A549 (cell line): ENCODE measurements at regions of chr10 and their contacts with region 1.

Region 1: GRCh38 chr10:123994417-123995081 is 98.8 kb downstream of the CHST15 start:
- DNase-seq: peak; percentile 83 to 91
- ATAC-seq: peak; percentile 73 to 87
- H3K4me3 ChIP-seq: peak overlapping the region; percentile 57
- H3K27ac ChIP-seq: peak overlapping the region; percentile 68 to 87
- H3K4me1 ChIP-seq: peaks cover 27% of the 10 kb centered on the region
- CTCF ChIP-seq: peak; percentile 96
- EP300 ChIP-seq: no peak
- POLR2A ChIP-seq: no peak
- RAD21 ChIP-seq: peak; percentile 93 to 99

Region 2: DNA sequence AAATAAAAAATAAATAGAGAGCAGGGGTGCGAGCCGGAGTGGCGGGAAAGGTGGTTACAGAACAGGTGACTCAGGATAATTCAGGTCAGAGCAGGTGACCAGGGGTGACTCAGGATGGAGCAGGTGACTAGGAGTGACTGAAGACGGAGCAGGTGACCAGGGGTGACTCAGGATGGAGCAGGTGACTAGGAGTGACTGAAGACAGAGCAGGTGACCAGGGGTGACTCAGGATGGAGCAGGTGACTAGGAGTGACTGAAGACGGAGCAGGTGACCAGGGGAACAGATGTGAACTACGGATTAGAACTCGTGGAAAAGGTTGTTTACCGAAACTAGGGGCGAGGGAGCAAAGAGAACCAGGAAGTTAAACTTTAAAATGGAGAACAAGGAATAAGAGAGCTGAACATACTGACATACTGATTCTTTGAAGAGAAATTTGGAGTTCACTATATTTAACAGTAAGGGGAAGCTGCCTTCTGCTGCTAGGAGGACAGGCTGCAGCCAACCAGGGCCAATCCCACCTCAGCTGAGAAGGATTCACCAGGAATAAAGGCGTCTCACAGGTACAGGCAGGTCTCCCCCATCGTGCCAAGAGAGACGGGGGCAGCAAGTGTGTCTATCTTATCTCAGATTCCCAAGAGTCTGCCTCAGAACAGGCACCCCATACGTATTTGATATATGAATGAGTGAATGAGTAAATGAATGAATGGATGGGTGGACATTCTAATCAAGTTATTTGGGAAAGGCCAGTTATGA is 204.2 kb before region 1 on chr10:
- CTCF ChIA-PET with region 1: no interaction called
- POLR2A ChIA-PET with region 1: no interaction called
- DNase-seq: no peak
- ATAC-seq: no peak
- H3K4me3 ChIP-seq: no peak overlapping the region
- H3K27ac ChIP-seq: no peak overlapping the region
- H3K4me1 ChIP-seq: no peaks in the 10 kb centered on the region
- CTCF ChIP-seq: no peak
- EP300 ChIP-seq: no peak
- POLR2A ChIP-seq: no peak
- RAD21 ChIP-seq: no peak

Region 3: DNA sequence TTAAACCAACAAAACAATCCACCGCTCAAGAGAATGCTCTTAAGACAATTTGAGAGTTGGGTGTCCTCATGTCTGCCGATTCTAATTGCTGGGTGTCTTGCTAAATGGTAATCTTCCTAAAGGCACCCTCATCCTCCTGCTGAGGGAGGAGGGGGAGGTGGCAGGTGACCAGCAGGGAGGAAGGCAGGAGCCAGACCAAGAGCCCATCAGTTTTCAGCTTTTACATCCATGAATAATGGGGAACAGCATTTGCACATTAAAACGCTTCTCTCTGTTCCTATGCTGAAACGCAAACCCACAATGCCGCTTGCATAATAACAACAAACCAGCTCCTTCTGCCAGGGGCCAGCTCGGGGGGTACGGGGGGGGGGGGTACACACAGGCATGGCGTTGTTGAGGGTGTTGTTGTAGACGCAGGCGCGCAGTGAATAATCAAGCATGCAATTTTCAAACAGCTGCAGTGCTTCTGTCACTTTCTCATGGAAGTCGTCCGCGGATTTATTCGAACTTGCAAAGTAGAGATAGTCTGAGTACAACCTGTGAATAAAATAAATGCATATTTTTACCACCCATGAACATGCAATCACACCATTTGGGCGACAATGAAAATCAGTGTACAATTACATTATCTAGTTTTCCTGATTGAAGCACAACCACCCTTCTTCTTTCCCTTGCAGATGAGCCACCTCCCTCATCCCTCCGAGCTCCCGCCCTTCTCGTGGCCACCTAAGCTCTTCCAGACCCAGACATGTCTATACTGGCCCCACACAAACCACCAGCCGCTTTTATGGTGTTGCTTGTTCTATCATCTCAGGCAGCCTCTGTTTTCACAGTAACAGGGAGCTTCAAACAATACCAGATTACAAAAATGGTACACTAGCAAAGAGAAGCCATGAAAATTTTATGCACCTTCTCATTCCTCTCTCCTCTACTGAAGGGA is 26.6 kb after region 1 on chr10:
- CTCF ChIA-PET with region 1: interaction called, 14 read pairs
- POLR2A ChIA-PET with region 1: no interaction called
- DNase-seq: no peak
- ATAC-seq: no peak
- H3K4me3 ChIP-seq: no peak overlapping the region
- H3K27ac ChIP-seq: no peak overlapping the region
- H3K4me1 ChIP-seq: no peaks in the 10 kb centered on the region
- CTCF ChIP-seq: no peak
- EP300 ChIP-seq: no peak
- POLR2A ChIP-seq: no peak
- RAD21 ChIP-seq: no peak

Region 4: DNA sequence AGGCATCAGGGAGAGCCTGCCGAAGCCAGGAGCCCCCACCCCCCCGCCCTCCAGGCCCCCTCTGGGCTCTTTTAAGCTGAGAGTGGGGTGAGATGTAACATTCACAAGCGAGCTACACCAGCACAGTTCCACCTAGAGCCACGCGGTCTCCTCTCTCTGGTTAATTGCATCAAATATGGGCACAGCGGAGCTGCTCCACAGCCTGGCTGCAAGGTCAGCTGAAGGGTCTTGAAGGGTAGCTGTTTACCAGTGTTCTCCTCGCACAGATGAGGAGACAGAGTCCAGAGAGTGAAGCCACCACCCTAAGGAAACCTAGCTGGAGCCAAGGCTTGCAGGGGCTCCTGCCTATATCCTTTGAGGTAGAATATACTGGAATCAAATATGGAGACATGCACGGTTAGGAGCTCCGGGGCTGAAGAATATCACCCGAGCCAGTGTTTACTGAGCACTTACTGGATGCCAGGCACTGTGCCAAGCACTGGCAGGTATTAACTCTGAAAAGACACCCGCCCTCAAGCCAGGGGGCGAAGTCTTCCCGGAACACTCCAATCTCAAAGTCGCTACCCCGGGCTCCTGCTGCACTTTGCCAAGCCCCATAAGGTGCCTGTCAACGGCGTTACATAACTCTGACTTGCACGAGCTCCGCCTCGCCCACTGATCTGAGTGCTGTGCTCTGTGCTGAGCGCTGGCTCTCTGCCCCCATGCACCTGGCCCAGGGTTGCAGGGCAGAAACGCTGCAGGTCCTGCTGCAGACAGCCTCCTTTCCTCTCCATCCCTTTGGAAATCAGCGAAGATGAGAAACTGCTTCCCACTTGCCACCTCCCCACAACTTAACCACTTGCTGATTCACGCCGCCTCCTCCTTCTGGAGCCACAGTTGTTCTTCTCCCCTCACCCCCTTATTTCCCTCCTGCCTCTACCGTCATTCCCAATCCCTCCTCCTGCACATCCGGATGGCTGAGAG is 93.4 kb after region 1 on chr10:
- CTCF ChIA-PET with region 1: interaction called, 45 read pairs
- POLR2A ChIA-PET with region 1: interaction called, 18 read pairs
- DNase-seq: no peak
- ATAC-seq: no peak
- H3K4me3 ChIP-seq: no peak overlapping the region
- H3K27ac ChIP-seq: no peak overlapping the region
- H3K4me1 ChIP-seq: peaks cover 9% of the 10 kb centered on the region
- CTCF ChIP-seq: no peak
- EP300 ChIP-seq: no peak
- POLR2A ChIP-seq: no peak
- RAD21 ChIP-seq: no peak

Region 5: DNA sequence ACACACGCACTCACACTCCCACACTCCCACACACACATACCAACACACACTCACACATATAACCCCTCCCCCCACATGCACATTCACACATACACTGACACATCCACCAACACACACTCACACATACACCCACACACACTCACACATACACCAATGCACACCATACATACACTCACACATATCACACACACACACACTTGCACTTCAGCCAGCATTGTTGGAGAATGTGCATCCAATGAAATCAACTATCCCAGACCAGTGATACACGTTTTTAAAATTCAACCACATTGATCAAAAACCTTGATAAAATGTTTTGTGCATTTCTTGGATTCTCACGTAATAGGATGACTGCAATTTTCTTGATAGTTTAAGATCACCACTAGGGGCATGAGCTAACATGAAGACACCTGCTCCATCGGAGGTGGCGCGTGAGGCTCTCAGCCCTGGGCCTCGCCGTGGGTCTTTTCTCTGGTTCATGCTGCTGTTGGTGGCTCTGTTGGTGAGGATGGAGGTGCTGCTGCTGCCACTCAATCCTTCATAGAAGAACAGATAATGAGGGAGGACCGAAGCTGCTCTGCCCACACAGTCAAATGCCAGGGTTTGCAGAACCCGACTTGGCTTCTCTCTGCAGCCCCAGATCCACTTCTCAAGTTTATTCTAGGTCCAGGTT is 131.0 kb after region 1 on chr10:
- CTCF ChIA-PET with region 1: interaction called, 10 read pairs
- POLR2A ChIA-PET with region 1: no interaction called
- DNase-seq: peak; percentile 30 to 58
- ATAC-seq: peak; percentile 54 to 83; a peak in 4 of 6 replicates
- H3K4me3 ChIP-seq: no peak overlapping the region
- H3K27ac ChIP-seq: no peak overlapping the region
- H3K4me1 ChIP-seq: no peaks in the 10 kb centered on the region
- CTCF ChIP-seq: peak; percentile 38
- EP300 ChIP-seq: no peak
- POLR2A ChIP-seq: no peak
- RAD21 ChIP-seq: 0 out of 5 replicates have a peak, but pooled peaks of 1 of the 2 experiments have one; percentile 16

Region 6: DNA sequence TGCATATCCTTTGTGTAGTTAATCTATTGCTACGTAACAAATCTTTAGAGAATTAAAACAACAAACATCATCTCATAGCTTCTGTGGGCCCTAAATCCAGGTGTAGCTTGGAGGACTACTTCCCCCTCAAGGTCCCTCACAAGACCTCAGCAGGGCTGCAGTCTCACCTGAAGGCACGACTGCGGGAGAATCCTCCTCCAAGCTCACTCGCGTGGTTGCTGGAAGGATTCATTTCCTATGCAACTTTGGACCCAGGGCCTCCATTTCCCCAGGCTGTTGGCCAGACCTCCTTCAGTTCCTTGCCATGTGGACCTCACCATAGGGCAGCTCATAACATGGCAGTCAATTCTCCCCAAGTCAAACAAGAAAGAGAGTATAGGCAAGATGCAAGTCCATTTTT is 283.8 kb after region 1 on chr10:
- CTCF ChIA-PET with region 1: interaction called, 13 read pairs
- POLR2A ChIA-PET with region 1: no interaction called
- DNase-seq: no peak
- ATAC-seq: no peak
- H3K4me3 ChIP-seq: no peak overlapping the region
- H3K27ac ChIP-seq: no peak overlapping the region
- H3K4me1 ChIP-seq: no peaks in the 10 kb centered on the region
- CTCF ChIP-seq: no peak
- EP300 ChIP-seq: no peak
- POLR2A ChIP-seq: no peak
- RAD21 ChIP-seq: no peak

Region 7: DNA sequence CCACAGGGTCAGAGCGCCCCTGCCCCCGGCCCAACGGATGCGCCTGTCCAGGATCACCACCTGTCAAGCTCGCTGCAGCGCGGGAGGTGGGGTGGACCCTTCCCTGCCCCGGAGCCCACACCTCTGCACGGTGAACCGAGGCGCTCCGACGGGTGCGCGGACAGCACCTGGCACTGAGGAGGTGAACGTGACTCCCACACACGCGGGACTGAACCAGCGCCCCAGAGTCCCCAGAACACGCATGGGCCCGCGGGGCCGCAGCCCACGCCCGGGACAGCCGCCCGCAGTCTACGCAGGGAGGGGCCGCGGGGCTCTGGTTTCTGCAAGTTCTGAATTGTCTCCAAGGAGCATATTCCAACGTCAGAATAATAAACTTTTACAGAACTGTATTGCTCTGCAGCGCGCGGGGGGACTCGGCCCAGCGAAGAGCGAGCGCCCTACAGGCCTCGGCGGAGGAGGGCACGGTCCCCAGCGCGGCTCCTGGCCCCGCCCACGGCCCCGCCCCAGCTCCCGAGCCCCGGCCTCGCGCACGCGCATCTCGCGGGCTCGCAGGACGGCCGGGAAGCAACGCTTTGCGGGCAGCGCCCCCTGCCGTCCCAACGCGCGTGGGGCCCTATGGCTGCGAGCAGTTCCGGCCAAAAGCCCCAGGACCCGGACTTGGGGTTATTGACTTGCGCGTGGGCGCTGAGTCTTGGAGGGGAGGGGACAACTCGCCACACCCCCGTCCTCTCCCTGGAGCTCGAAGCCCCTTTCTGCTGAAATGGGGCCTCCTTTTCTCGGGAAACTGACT is 394.5 kb after region 1 on chr10:
- CTCF ChIA-PET with region 1: interaction called, 581 read pairs
- POLR2A ChIA-PET with region 1: interaction called, 15 read pairs
- DNase-seq: peak; percentile 78 to 88
- ATAC-seq: peak; percentile 90 to 97
- H3K4me3 ChIP-seq: peak overlapping the region; percentile 42
- H3K27ac ChIP-seq: peak overlapping the region; percentile 66 to 84; a peak in 5 of 6 replicates
- H3K4me1 ChIP-seq: no peaks in the 10 kb centered on the region; the same call in 2 of the 3 replicates
- CTCF ChIP-seq: peak; percentile 98
- EP300 ChIP-seq: no peak
- POLR2A ChIP-seq: peak; percentile 28; the same call in 1 of the 2 replicates
- RAD21 ChIP-seq: peak; percentile 93 to 100